ENCODE measurements at regions of chr9 and their contacts with region 1.

Region 1: GRCh38 chr9:97921959-97922724 is at the start of gene TRMO:
- DNase-seq: peak; percentile 97
- H3K4me3 ChIP-seq: peak within 1 kb of the TSS; percentile 56 to 89 (median 69)
- H3K27ac ChIP-seq: peak within 1 kb of the TSS; percentile 100
- H3K4me1 ChIP-seq: peaks cover 0 to 8% of the 10 kb centered on the region in 2 donors
- H3K27me3 ChIP-seq: no peaks in the 10 kb centered on the region
- CTCF ChIP-seq: peak; percentile 28 to 74 (median 68)
- POLR2A ChIP-seq: peak; percentile 96
- total RNA-seq, gene TRMO: 29.8 to 46.8 (median 35.4) TPM

Region 2: GRCh38 chr9:98255578-98256296 is 333.6 kb after region 1 on chr9 and contains the start of gene TBC1D2:
- intact Hi-C with region 1: loop called (anchors 5 kb)
- DNase-seq: peak; percentile 96 to 97
- H3K4me3 ChIP-seq: peak within 1 kb of the TSS; percentile 74 to 91 (median 85)
- H3K27ac ChIP-seq: peak within 1 kb of the TSS; percentile 95 to 96
- H3K4me1 ChIP-seq: peaks cover 0 to 7% of the 10 kb centered on the region in 2 donors
- H3K27me3 ChIP-seq: no peaks in the 10 kb centered on the region
- CTCF ChIP-seq: peak in 2 of 3 donors; percentile 20 to 43
- POLR2A ChIP-seq: no peak
- total RNA-seq, gene TBC1D2: 10.8 to 17.1 (median 13.6) TPM